Sciatic nerve (tissue), 2 donors: ENCODE measurements at regions of chr16 and their contacts with region 1.

Region 1: DNA sequence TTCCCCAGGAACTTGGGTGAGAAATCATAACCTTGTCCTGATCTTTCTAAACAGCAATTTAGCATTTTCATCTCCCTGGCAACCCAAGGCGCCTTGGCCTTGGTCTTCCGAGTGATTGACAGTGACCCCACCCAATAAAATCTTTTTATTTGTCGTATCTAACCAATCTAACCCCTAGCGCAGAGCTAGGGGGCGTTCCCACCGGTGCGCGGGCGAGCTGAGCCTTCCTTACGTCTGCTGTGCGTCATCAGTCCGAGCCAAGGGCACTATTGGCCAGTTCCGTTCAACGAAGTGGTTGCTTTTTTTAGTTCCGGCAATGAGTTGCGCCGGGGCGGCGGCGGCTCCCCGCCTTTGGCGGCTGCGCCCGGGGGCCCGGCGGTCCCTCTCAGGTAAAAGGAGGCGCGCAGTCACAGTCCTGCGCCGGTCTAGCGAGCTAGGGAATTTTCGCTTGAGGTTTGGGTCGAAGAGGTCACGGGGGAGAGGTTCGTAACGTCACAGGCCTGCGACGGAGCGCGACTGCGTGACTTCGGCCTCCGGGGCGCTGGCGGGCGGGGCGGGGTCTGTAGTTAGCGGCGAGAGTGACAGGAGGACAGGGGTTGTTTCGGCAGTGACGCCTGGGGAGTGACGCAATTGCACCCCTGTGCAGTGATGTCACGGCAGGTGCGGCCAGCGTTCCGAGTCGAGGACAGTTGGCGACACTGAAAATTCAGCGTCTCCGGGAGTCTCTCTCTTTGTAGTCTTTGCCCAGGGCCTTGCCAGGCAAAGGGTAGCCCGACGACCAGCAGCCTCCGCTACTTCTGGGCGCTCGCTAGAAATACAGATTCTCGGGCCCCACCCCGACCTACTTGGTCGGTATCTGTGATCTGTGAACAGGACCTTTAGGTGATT is at the start of gene COQ7:
- DNase-seq: peak; percentile 98
- ATAC-seq: peak; percentile 99
- total RNA-seq, gene COQ7: 27.5 TPM

Region 2: DNA sequence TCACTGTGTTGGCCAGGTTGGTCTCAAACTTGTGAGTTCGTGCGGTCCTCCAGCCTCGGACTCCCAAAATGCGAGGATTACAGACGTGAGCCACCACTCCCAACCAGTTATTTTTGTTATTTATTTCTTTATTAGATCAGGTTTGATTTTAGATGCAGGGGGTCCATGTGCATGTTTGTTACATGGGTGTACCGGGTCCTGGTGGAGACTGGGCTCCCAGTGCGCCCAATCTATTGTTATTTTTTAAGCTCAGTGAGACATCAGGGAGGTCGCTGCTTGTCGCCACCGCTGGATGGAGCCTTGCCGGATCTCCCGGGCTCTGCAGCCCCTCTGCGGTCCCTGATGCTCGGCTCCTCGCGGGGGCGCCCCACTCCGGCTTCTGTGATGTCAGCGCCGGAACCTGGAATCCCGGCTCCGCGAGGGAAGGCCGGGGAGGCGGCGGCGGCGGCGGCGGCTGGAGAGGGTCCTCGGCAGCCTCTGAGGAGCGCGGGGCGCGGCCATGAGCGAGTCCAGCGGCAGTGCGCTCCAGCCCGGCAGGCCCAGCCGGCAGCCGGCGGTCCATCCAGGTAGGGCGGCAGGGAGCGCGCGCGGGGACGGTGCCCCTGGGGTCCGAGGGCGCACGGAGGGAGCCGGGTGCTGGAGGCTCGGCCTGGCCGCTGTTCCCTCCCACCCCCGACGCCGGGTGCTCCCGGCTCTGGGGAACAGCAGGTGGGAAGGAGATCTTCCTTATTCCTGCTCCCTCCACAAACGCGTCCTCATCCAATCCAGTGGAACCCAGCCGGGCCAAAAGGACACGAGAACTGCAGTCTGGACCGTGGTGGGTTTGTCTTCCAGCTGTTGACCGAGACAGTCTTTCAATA is 83.8 kb before region 1 on chr16 and contains the start of gene TMC7:
- intact Hi-C with region 1: loop called (anchors 5 kb)
- DNase-seq: peak; percentile 85
- ATAC-seq: peak; percentile 79
- total RNA-seq, gene TMC7: 9.6 TPM

Region 3: DNA sequence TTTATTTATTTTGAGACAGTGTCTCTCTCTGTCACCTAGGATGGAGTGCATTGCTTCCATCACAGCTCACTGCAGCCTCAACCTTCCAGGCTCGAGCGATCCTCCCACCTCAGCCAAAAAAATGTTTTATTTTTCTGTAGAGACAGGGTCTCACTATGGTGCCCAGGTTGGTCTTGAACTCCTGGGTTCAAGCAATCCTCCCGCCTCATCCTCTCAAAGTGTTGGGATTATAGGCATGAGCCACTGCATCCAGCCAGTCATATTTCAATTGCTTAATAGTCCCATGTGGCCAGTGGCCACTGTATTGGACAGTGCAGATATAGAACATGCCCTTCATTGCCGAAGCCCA is 68.6 kb before region 1 on chr16:
- intact Hi-C with region 1: loop called (anchors 5 kb)
- DNase-seq: no peak
- ATAC-seq: no peak